ENCODE measurements at regions of chr12 and their contacts with region 1.

Region 1: DNA sequence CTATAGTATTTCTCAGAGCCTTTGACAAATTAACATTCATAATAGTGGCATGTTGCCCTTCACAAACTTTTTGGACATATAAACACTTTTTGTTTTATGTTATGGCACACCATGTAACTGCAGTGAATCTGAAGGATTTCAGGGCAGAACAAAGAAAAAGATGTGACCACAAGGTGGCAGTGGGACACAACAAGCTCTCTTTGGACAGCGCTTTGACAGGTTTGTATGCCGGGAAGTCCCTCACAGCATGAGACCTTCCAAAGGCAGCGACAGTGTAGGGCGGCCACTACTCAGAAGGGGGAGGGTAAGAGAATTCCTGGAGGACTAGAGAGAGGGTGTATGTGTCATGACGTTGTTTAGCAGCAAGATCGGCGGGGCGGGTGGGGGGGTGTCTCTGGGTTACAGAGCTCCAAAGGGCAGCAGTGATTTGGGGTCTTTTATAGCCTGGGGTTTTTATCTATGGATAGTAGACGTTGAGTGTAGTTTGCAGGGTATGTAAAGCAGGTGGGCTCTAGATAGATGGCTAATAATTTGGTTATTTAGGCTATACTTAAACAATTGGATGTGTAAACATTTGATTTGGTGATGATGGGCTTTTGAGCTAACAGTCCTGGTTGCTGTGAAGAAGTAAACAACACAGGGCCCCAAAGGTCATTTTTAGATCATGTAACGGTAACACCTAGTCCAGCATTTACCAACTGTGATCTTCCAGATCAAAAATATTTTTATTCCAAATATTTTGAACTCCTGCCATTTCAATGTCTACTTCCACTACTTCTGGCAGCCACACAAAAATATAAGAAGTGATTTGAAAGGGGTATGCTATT is 22.9 kb downstream of the ETFBKMT start:
- DNase-seq: peak; percentile 77
- H3K4me3 Mint-ChIP-seq: no peak overlapping the region
- H3K27ac Mint-ChIP-seq: peak overlapping the region; percentile 44
- H3K4me1 Mint-ChIP-seq: peaks cover 9% of the 10 kb centered on the region
- H3K27me3 Mint-ChIP-seq: no peaks in the 10 kb centered on the region

Region 2: DNA sequence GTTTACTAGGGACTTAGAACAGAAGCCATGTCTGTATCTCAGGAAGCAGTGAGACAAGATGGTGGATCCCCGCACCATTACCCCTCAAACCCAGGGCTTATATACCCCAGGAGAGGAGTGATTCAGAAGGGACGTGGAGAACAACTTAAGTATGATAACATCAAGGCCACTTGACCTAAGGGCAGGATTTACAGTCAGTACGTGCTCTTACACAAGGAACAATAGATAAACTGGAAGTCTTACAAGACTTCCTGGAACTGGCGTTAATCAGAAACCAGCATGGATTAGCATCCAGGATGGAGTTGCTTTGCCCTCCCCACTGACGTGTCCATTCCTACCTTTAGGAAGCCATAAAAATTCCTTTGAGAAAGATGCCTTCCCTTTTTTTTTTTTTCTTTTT is 31.4 kb before region 1 on chr12:
- CTCF ChIA-PET with region 1: interaction called, 16 read pairs
- POLR2A ChIA-PET with region 1: interaction called, 3 read pairs
- intact Hi-C with region 1: loop called (anchors 1 kb)
- DNase-seq: no peak
- H3K4me3 Mint-ChIP-seq: no peak overlapping the region
- H3K27ac Mint-ChIP-seq: no peak overlapping the region
- H3K4me1 Mint-ChIP-seq: peaks cover 11% of the 10 kb centered on the region
- H3K27me3 Mint-ChIP-seq: no peaks in the 10 kb centered on the region

Region 3: DNA sequence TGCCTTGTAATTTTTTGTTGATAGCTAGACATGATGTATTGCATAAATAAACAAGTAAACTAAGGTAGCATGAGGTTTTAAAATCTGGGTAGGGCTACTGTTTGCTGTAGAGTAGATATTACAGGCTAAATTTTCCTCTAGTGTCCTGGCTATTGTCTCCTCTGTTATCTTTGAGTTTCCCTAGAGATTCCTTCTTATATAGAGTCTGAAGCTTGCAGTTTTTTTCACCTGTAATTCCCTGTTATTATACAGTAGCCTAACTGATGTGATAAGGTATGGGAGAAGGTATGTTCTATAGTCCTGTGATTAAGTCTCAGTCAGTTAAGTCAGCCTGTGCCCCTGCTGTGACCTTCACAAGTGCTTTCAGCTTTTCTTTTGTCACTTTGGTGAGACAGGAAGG is 13.3 kb before region 1 on chr12:
- CTCF ChIA-PET with region 1: interaction called, 10 read pairs
- POLR2A ChIA-PET with region 1: no interaction called
- intact Hi-C with region 1: no loop called
- DNase-seq: no peak
- H3K4me3 Mint-ChIP-seq: no peak overlapping the region
- H3K27ac Mint-ChIP-seq: no peak overlapping the region
- H3K4me1 Mint-ChIP-seq: no peaks in the 10 kb centered on the region
- H3K27me3 Mint-ChIP-seq: no peaks in the 10 kb centered on the region

Region 4: GRCh38 chr12:31928246-31929026 is 246.1 kb after region 1 on chr12:
- CTCF ChIA-PET with region 1: no interaction called
- POLR2A ChIA-PET with region 1: no interaction called
- intact Hi-C with region 1: no loop called
- DNase-seq: peak; percentile 54
- H3K4me3 Mint-ChIP-seq: peak overlapping the region; percentile 75
- H3K27ac Mint-ChIP-seq: peak overlapping the region; percentile 90
- H3K4me1 Mint-ChIP-seq: peaks cover 45% of the 10 kb centered on the region
- H3K27me3 Mint-ChIP-seq: no peaks in the 10 kb centered on the region

Region 5: DNA sequence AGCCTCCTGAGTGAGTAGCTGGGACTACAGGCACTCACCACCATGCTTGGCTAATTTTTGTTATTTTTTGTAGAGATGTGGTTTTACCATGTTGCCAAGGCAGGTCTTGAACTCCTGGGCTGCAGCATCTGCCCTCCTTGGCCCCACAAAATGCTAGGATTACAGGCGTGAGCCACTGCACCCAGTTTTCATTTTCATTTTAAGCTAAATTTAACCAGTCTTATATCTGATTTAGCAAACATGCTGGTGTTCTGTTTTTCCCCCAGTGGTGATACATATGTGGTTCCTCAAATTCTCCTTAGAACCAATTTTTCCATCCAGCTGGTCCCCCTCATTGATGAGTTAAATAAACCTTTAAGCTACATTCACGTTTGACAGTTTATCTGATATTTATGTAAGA is 380.5 kb after region 1 on chr12:
- CTCF ChIA-PET with region 1: interaction called, 9 read pairs
- POLR2A ChIA-PET with region 1: no interaction called
- intact Hi-C with region 1: loop called (anchors 1 kb)
- DNase-seq: no peak
- H3K4me3 Mint-ChIP-seq: no peak overlapping the region
- H3K27ac Mint-ChIP-seq: no peak overlapping the region
- H3K4me1 Mint-ChIP-seq: peaks cover 2% of the 10 kb centered on the region
- H3K27me3 Mint-ChIP-seq: no peaks in the 10 kb centered on the region

Region 6: GRCh38 chr12:32302218-32303173 is 620.1 kb after region 1 on chr12:
- CTCF ChIA-PET with region 1: interaction called, 12 read pairs
- POLR2A ChIA-PET with region 1: no interaction called
- intact Hi-C with region 1: loop called (anchors 2 kb)
- DNase-seq: no peak
- H3K4me3 Mint-ChIP-seq: no peak overlapping the region
- H3K27ac Mint-ChIP-seq: no peak overlapping the region
- H3K4me1 Mint-ChIP-seq: no peaks in the 10 kb centered on the region
- H3K27me3 Mint-ChIP-seq: no peaks in the 10 kb centered on the region